Breast epithelium (tissue), 4 donors: ENCODE measurements at regions of chr10 and their contacts with region 1.

Region 1: GRCh38 chr10:98646998-98647917 is 200.5 kb upstream of the HPS1 start:
- DNase-seq: no peak
- H3K4me3 ChIP-seq: no peak overlapping the region
- H3K27ac ChIP-seq: no peak overlapping the region
- H3K4me1 ChIP-seq: no peaks in the 10 kb centered on the region
- H3K27me3 ChIP-seq: no peaks in the 10 kb centered on the region
- CTCF ChIP-seq: no peak
- POLR2A ChIP-seq: no peak

Region 2: GRCh38 chr10:98878418-98878817 is 231.2 kb after region 1 on chr10:
- intact Hi-C with region 1: loop called (anchors 5 kb)
- DNase-seq: no peak
- H3K4me3 ChIP-seq: no peak overlapping the region
- H3K27ac ChIP-seq: no peak overlapping the region
- H3K4me1 ChIP-seq: no peaks in the 10 kb centered on the region
- H3K27me3 ChIP-seq: no peaks in the 10 kb centered on the region
- CTCF ChIP-seq: no peak
- POLR2A ChIP-seq: no peak